ENCODE measurements at regions of chr11 and their contacts with region 1.

Region 1: GRCh38 chr11:5684646-5685362 is at the start of gene TRIM5:
- DNase-seq: peak; percentile 76
- H3K4me3 Mint-ChIP-seq: peak within 1 kb of the TSS; percentile 95
- H3K27ac Mint-ChIP-seq: peak within 1 kb of the TSS; percentile 96
- H3K4me1 Mint-ChIP-seq: peaks cover 31% of the 10 kb centered on the region
- H3K27me3 Mint-ChIP-seq: no peaks in the 10 kb centered on the region
- total RNA-seq, gene TRIM5: 12.4 and 14.1 TPM in 2 replicates

Region 2: DNA sequence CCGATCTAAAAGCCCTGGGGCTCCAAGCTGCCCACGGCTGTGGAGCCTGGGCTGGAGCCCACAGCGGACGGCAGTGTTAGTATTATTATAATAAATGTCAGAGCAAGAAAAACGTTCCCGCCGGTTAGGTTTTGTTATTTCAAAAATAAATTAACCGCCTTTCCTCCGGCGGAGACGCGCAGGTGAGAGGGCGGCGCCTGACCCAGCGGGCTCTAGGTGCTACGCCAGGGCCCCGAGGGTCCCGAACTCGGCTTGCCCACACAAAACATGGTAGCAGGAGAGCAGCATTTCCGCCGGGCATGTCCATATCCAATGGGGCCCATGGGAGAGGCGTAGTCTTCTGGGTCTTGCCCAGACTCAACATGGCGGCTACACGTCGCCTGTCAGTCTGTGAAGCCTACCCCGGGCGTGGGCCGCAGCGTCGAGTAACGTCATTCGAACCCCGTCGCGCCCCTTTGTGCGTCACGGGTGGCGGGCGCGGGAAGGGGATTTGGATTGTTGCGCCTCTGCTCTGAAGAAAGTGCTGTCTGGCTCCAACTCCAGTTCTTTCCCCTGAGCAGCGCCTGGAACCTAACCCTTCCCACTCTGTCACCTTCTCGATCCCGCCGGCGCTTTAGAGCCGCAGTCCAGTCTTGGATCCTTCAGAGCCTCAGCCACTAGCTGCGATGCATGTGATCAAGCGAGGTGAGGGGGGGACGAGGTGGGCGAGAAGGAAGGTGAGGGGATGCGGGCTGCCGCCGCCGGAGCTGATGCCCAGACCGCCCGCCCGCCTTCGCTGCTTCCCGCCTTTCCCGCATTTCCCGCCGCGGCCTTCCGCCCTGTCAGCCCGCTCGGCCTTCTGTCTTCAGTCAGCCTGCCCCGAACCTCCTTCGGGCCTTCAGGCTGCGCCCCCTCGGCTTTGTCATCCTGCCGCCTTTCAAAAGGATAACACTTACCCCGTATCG is 1590.2 kb before region 1 on chr11 and contains the start of gene RRM1:
- intact Hi-C with region 1: loop called (anchors 10 kb)
- DNase-seq: peak; percentile 92
- H3K4me3 Mint-ChIP-seq: peak within 1 kb of the TSS; percentile 94
- H3K27ac Mint-ChIP-seq: peak within 1 kb of the TSS; percentile 88
- H3K4me1 Mint-ChIP-seq: peaks cover 75% of the 10 kb centered on the region
- H3K27me3 Mint-ChIP-seq: no peaks in the 10 kb centered on the region
- total RNA-seq, gene RRM1: 142 and 146 TPM in 2 replicates

Region 3: GRCh38 chr11:5605849-5606248 is 79.0 kb before region 1 on chr11:
- intact Hi-C with region 1: no loop called
- DNase-seq: no peak
- H3K4me3 Mint-ChIP-seq: no peak overlapping the region
- H3K27ac Mint-ChIP-seq: no peak overlapping the region
- H3K4me1 Mint-ChIP-seq: no peaks in the 10 kb centered on the region
- H3K27me3 Mint-ChIP-seq: no peaks in the 10 kb centered on the region

Region 4: GRCh38 chr11:5624489-5625279 is 60.1 kb before region 1 on chr11 and contains the start of gene TRIM34:
- intact Hi-C with region 1: loop called (anchors 2 kb)
- DNase-seq: peak; percentile 62
- H3K4me3 Mint-ChIP-seq: peak within 1 kb of the TSS; percentile 92
- H3K27ac Mint-ChIP-seq: peak within 1 kb of the TSS; percentile 71
- H3K4me1 Mint-ChIP-seq: peaks cover 42% of the 10 kb centered on the region
- H3K27me3 Mint-ChIP-seq: no peaks in the 10 kb centered on the region
- total RNA-seq, gene TRIM34: 6.7 and 7.8 TPM in 2 replicates